ENCODE measurements at regions of chr22 and their contacts with region 1.

Region 1: DNA sequence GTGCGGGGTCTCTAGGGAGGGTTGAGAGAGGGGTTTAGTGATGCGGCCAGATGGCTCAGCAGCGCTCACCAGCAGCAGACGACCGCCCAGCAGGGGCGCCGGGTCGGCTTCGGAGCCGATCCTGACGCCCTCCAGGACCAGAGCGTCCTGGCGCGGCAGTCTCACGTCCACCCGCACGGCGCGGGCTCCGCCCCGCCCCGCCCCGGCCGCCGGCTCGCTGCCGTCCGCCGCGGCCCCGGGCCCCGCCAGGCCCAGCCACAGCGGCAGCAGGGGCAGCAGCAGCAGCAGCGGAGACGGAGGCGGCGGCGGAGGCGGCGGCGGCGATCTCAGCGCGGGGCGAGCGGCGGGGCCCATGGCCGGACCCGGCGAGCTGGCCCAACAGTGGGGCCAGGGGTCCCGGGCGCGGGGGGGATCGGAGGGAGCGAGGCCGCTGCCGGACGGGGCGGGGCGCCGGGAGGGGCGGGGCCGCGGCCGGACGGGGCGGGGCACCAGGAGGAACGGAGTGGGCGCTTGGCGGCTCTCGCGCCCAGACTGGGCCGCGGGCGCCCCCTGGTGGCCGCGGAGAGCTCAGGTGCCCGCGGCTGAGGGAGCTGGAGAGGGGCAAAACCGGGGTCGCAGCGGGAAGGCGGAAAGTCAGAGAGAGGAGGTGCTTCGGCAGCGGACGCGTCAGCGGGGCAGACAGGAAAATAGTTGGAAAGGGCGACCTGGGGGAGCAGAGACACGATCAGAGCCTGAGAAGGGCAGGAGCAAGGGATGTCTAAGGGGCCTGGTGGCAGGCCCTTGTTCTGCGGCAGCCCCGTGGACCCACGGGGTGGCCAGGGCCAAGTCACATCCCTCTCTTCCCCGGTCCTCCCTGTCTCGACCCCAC is at the start of gene RNF215:
- H3K4me3 ChIP-seq: peak within 1 kb of the TSS; percentile 62
- H3K27ac ChIP-seq: peak within 1 kb of the TSS; percentile 76; the same call in 1 of the 2 replicates
- H3K4me1 ChIP-seq: peaks cover 2% of the 10 kb centered on the region; the same call in 1 of the 2 replicates
- CTCF ChIP-seq: peak; percentile 98

Region 2: GRCh38 chr22:30104501-30105156 is 282.6 kb before region 1 on chr22:
- CTCF ChIA-PET with region 1: interaction called, 14 read pairs
- POLR2A ChIA-PET with region 1: no interaction called
- H3K4me3 ChIP-seq: no peak overlapping the region
- H3K27ac ChIP-seq: no peak overlapping the region
- H3K4me1 ChIP-seq: no peaks in the 10 kb centered on the region
- CTCF ChIP-seq: no peak

Region 3: DNA sequence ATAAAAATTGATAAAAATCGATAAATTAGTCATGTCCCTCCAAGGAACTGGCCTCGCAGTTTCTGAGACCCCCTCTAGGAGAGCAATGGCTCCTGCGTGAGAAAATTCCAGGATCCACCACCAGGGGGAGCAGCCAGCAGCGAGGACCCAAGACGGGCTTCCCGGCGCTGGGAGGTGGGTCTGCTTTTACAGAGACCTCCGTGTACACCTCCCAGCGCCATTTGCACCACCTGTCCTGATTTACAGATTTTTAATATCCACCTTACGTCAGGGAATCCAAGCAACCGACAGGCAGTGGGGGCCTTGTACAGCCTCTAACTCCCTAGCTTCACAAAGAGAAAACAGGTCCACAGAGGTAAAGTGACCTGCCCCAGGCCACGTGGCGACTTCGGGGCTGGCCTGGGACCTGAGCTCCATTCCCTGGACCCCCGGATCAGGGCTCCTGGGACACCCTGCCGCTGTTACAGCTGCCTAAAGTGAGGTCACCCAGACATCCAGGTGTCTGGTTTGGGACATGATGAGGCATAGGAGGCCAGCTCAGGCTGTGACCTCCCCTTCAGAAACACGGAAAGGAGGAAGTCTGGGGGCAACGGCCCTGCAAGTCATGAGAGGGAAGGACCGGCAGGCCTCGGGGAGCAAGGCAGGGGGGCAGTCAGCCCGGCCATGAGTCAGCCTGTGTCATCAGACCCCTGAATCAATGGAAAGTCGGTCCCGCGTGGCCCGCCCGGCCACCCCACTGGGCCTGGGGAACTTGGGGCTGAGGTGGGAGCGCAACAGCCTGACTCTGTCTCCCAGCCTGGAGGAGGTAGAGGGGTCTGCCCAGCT is 124.1 kb before region 1 on chr22:
- CTCF ChIA-PET with region 1: interaction called, 12 read pairs
- POLR2A ChIA-PET with region 1: interaction called, 3 read pairs
- H3K4me3 ChIP-seq: no peak overlapping the region
- H3K27ac ChIP-seq: no peak overlapping the region
- H3K4me1 ChIP-seq: no peaks in the 10 kb centered on the region
- CTCF ChIP-seq: peak; percentile 67

Region 4: GRCh38 chr22:30373331-30374325 is 13.6 kb before region 1 on chr22:
- CTCF ChIA-PET with region 1: interaction called, 6 read pairs
- POLR2A ChIA-PET with region 1: interaction called, 14 read pairs
- H3K4me3 ChIP-seq: no peak overlapping the region
- H3K27ac ChIP-seq: no peak overlapping the region
- H3K4me1 ChIP-seq: no peaks in the 10 kb centered on the region
- CTCF ChIP-seq: no peak

Region 5: GRCh38 chr22:30402028-30402765 is 15.0 kb after region 1 on chr22:
- CTCF ChIA-PET with region 1: interaction called, 13 read pairs
- POLR2A ChIA-PET with region 1: interaction called, 11 read pairs
- H3K4me3 ChIP-seq: no peak overlapping the region
- H3K27ac ChIP-seq: no peak overlapping the region
- H3K4me1 ChIP-seq: peaks cover 3% of the 10 kb centered on the region; the same call in 1 of the 2 replicates
- CTCF ChIP-seq: no peak

Region 6: GRCh38 chr22:30485362-30485988 is 98.3 kb after region 1 on chr22:
- CTCF ChIA-PET with region 1: interaction called, 28 read pairs
- POLR2A ChIA-PET with region 1: no interaction called
- H3K4me3 ChIP-seq: no peak overlapping the region
- H3K27ac ChIP-seq: no peak overlapping the region
- H3K4me1 ChIP-seq: no peaks in the 10 kb centered on the region
- CTCF ChIP-seq: peak; percentile 89